CD4-positive, alpha-beta T cell (primary cell): ENCODE measurements at regions of chr10 and their contacts with region 1.

Region 1: DNA sequence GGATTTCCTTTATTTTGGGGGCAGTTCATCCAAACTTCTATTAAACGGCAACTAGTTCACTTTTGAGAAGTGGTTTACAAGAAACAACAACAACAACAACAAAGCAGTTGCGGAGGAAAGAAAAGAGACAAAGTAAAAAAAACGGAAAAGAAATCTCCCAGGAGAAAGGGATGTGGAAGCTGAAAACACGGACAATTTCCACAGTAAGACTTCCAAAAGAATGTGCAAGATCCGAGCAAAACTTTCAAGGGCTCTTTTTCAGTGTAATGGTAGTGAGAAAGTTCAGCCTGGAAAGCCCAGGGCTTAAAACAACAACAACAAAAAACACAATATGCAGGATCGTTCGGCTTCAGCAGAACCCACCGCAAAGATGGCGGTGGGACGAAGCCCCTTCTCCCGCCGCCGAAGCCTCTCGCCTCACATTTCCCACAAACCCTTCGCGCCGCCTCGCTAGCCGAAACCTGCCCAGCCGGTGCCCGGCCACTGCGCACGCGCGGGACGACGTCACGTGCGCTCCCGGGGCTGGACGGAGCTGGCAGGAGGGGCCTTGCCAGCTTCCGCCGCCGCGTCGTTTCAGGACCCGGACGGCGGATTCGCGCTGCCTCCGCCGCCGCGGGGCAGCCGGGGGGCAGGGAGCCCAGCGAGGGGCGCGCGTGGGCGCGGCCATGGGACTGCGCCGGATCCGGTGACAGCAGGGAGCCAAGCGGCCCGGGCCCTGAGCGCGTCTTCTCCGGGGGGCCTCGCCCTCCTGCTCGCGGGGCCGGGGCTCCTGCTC is at the start of gene TNKS2:
- DNase-seq: peak; percentile 83 to 96 (median 91)
- ATAC-seq: peak; percentile 73
- H3K4me3 ChIP-seq: peak within 1 kb of the TSS; percentile 93
- H3K4me3 Mint-ChIP-seq: peak within 1 kb of the TSS; percentile 98
- H3K27ac ChIP-seq: peak within 1 kb of the TSS; percentile 72 to 90
- H3K27ac Mint-ChIP-seq: peak within 1 kb of the TSS; percentile 97
- H3K4me1 ChIP-seq: peaks cover 20% of the 10 kb centered on the region
- H3K4me1 Mint-ChIP-seq: peaks cover 69% of the 10 kb centered on the region
- H3K27me3 ChIP-seq: no peaks in the 10 kb centered on the region
- H3K27me3 Mint-ChIP-seq: no peaks in the 10 kb centered on the region
- CTCF ChIP-seq: no peak
- total RNA-seq, gene TNKS2: 47.8 to 50.4 TPM

Region 2: DNA sequence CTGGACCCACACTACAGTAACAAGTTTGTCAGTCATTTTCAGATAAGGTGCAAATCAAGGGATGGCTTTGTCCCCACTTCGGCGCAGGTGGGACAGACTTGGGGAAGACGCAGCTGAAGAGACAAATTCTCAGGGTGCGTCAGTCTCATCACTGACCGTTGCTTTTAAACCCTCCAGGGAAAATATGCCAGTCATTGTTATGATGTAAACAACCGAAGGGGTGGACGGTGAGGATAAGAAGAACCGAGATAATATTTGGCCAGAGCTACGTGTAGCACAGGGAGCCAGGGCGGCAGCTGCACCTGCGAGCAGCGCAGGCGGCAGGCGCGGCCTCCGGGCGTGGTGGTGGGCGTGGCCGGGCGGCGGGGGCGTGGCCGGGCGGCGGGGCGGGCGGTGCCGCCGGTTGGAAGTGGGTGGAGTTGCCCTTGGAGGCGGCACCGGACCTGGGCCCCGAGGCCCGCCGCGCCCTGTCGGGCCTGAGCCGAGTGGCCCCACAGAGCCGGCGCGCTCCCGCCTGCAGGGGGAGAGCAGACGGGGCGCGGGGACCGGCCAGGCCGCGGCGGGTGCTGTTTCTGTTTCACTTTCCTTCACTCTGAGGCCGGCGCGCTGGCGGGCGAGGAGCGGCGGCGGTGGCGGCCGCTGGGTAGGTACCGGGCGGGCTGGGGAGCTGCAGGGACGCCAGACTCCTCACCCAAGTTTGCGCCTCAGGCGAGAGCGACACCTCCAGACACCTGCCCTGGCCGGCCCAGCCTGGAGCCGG is 577.7 kb before region 1 on chr10 and contains the start of gene PCGF5:
- CTCF ChIA-PET with region 1: no interaction called
- POLR2A ChIA-PET with region 1: no interaction called
- intact Hi-C with region 1: loop called in 1 of 2 experiments (anchors 2 kb)
- DNase-seq: peak; percentile 81 to 96 (median 91)
- ATAC-seq: peak; percentile 94
- H3K4me3 ChIP-seq: peak within 1 kb of the TSS; percentile 59
- H3K4me3 Mint-ChIP-seq: peak within 1 kb of the TSS; percentile 89
- H3K27ac ChIP-seq: peak within 1 kb of the TSS in 1 of 2 donors; percentile 65
- H3K27ac Mint-ChIP-seq: peak within 1 kb of the TSS; percentile 84
- H3K4me1 ChIP-seq: peaks cover 21% of the 10 kb centered on the region
- H3K4me1 Mint-ChIP-seq: peaks cover 44% of the 10 kb centered on the region
- H3K27me3 ChIP-seq: no peaks in the 10 kb centered on the region
- H3K27me3 Mint-ChIP-seq: no peaks in the 10 kb centered on the region
- CTCF ChIP-seq: no peak
- total RNA-seq, gene PCGF5: 57.7 to 58.4 TPM

Region 3: GRCh38 chr10:91597197-91597881 is 200.7 kb before region 1 on chr10:
- CTCF ChIA-PET with region 1: no interaction called
- POLR2A ChIA-PET with region 1: no interaction called
- intact Hi-C with region 1: no loop called
- DNase-seq: no peak
- ATAC-seq: no peak
- H3K4me3 ChIP-seq: no peak overlapping the region
- H3K4me3 Mint-ChIP-seq: no peak overlapping the region
- H3K27ac ChIP-seq: no peak overlapping the region
- H3K27ac Mint-ChIP-seq: no peak overlapping the region
- H3K4me1 ChIP-seq: no peaks in the 10 kb centered on the region
- H3K4me1 Mint-ChIP-seq: no peaks in the 10 kb centered on the region
- H3K27me3 ChIP-seq: peaks cover 0 to 13% of the 10 kb centered on the region in 2 experiments
- H3K27me3 Mint-ChIP-seq: peaks cover 9% of the 10 kb centered on the region
- CTCF ChIP-seq: no peak

Region 4: GRCh38 chr10:91758303-91759146 is 39.5 kb before region 1 on chr10:
- CTCF ChIA-PET with region 1: no interaction called
- POLR2A ChIA-PET with region 1: interaction called, 9 read pairs
- intact Hi-C with region 1: loop called in 1 of 2 experiments (anchors 2 kb)
- DNase-seq: peak in 3 of 14 experiments; percentile 70 to 77 (median 73)
- ATAC-seq: peak; percentile 76
- H3K4me3 ChIP-seq: no peak overlapping the region
- H3K4me3 Mint-ChIP-seq: no peak overlapping the region
- H3K27ac ChIP-seq: no peak overlapping the region
- H3K27ac Mint-ChIP-seq: no peak overlapping the region
- H3K4me1 ChIP-seq: no peaks in the 10 kb centered on the region
- H3K4me1 Mint-ChIP-seq: no peaks in the 10 kb centered on the region
- H3K27me3 ChIP-seq: peaks cover 0 to 10% of the 10 kb centered on the region in 2 experiments
- H3K27me3 Mint-ChIP-seq: peaks cover 23% of the 10 kb centered on the region
- CTCF ChIP-seq: peak; percentile 77

Region 5: GRCh38 chr10:91932737-91933136 is 134.7 kb after region 1 on chr10:
- CTCF ChIA-PET with region 1: no interaction called
- POLR2A ChIA-PET with region 1: no interaction called
- intact Hi-C with region 1: no loop called
- DNase-seq: no peak
- ATAC-seq: no peak
- H3K4me3 ChIP-seq: no peak overlapping the region
- H3K4me3 Mint-ChIP-seq: no peak overlapping the region
- H3K27ac ChIP-seq: no peak overlapping the region
- H3K27ac Mint-ChIP-seq: no peak overlapping the region
- H3K4me1 ChIP-seq: peaks cover 5% of the 10 kb centered on the region
- H3K4me1 Mint-ChIP-seq: peaks cover 77% of the 10 kb centered on the region
- H3K27me3 ChIP-seq: no peaks in the 10 kb centered on the region
- H3K27me3 Mint-ChIP-seq: no peaks in the 10 kb centered on the region
- CTCF ChIP-seq: no peak

Region 6: GRCh38 chr10:92290837-92291615 is 493.0 kb after region 1 on chr10 and contains the starts of genes CPEB3 and MARCHF5:
- CTCF ChIA-PET with region 1: no interaction called
- POLR2A ChIA-PET with region 1: interaction called, 8 read pairs
- intact Hi-C with region 1: loop called in 1 of 2 experiments (anchors 5 kb)
- DNase-seq: peak; percentile 80 to 97 (median 87)
- ATAC-seq: peak; percentile 97
- H3K4me3 ChIP-seq: peak within 1 kb of the TSS; percentile 97
- H3K4me3 Mint-ChIP-seq: peak within 1 kb of the TSS; percentile 97
- H3K27ac ChIP-seq: peak within 1 kb of the TSS; percentile 37 to 50
- H3K27ac Mint-ChIP-seq: peak within 1 kb of the TSS; percentile 87
- H3K4me1 ChIP-seq: peaks cover 29% of the 10 kb centered on the region
- H3K4me1 Mint-ChIP-seq: peaks cover 33% of the 10 kb centered on the region
- H3K27me3 ChIP-seq: no peaks in the 10 kb centered on the region
- H3K27me3 Mint-ChIP-seq: no peaks in the 10 kb centered on the region
- CTCF ChIP-seq: peak; percentile 44
- total RNA-seq, gene CPEB3: 1.2 to 1.3 TPM
- total RNA-seq, gene MARCHF5: 33.5 to 36.1 TPM

Region 7: GRCh38 chr10:92366412-92367021 is 568.5 kb after region 1 on chr10:
- CTCF ChIA-PET with region 1: no interaction called
- POLR2A ChIA-PET with region 1: no interaction called
- intact Hi-C with region 1: no loop called
- DNase-seq: no peak
- ATAC-seq: no peak
- H3K4me3 ChIP-seq: no peak overlapping the region
- H3K4me3 Mint-ChIP-seq: no peak overlapping the region
- H3K27ac ChIP-seq: no peak overlapping the region
- H3K27ac Mint-ChIP-seq: no peak overlapping the region
- H3K4me1 ChIP-seq: no peaks in the 10 kb centered on the region
- H3K4me1 Mint-ChIP-seq: no peaks in the 10 kb centered on the region
- H3K27me3 ChIP-seq: peaks cover 4 to 12% of the 10 kb centered on the region in 2 experiments
- H3K27me3 Mint-ChIP-seq: peaks cover 31% of the 10 kb centered on the region
- CTCF ChIP-seq: no peak

Region 8: GRCh38 chr10:92592761-92593618 is 794.9 kb after region 1 on chr10 and contains the start of gene KIF11:
- CTCF ChIA-PET with region 1: no interaction called
- POLR2A ChIA-PET with region 1: interaction called, 4 read pairs
- intact Hi-C with region 1: loop called in 1 of 2 experiments (anchors 5 kb)
- DNase-seq: peak; percentile 91 to 98 (median 96)
- ATAC-seq: peak; percentile 81
- H3K4me3 ChIP-seq: peak within 1 kb of the TSS; percentile 75
- H3K4me3 Mint-ChIP-seq: peak within 1 kb of the TSS; percentile 99
- H3K27ac ChIP-seq: peak within 1 kb of the TSS; percentile 84 to 89
- H3K27ac Mint-ChIP-seq: peak within 1 kb of the TSS; percentile 99
- H3K4me1 ChIP-seq: peaks cover 38% of the 10 kb centered on the region
- H3K4me1 Mint-ChIP-seq: peaks cover 29% of the 10 kb centered on the region
- H3K27me3 ChIP-seq: no peaks in the 10 kb centered on the region
- H3K27me3 Mint-ChIP-seq: no peaks in the 10 kb centered on the region
- CTCF ChIP-seq: no peak
- total RNA-seq, gene KIF11: 0.38 to 0.47 TPM